ENCODE measurements at regions of chr7 and their contacts with region 1.

Region 1: GRCh38 chr7:102464577-102465280 is at the starts of genes ALKBH4 and LRWD1:
- DNase-seq: peak; percentile 90 to 92 (median 91)
- H3K4me3 ChIP-seq: peak within 1 kb of the TSS; percentile 93 to 94
- H3K4me3 Mint-ChIP-seq: peak within 1 kb of the TSS; percentile 90 to 94 (median 92)
- H3K27ac ChIP-seq: peak within 1 kb of the TSS; percentile 85
- H3K27ac Mint-ChIP-seq: peak within 1 kb of the TSS; percentile 78 to 93 (median 88)
- H3K4me1 ChIP-seq: peaks cover 30% of the 10 kb centered on the region
- H3K4me1 Mint-ChIP-seq: peaks cover 11 to 54% (median 28%) of the 10 kb centered on the region in 4 donors
- H3K27me3 ChIP-seq: no peaks in the 10 kb centered on the region
- H3K27me3 Mint-ChIP-seq: no peaks in the 10 kb centered on the region
- total RNA-seq, gene ALKBH4: 11.8 to 11.9 TPM
- total RNA-seq, gene LRWD1: 26.0 to 28.5 TPM

Region 2: DNA sequence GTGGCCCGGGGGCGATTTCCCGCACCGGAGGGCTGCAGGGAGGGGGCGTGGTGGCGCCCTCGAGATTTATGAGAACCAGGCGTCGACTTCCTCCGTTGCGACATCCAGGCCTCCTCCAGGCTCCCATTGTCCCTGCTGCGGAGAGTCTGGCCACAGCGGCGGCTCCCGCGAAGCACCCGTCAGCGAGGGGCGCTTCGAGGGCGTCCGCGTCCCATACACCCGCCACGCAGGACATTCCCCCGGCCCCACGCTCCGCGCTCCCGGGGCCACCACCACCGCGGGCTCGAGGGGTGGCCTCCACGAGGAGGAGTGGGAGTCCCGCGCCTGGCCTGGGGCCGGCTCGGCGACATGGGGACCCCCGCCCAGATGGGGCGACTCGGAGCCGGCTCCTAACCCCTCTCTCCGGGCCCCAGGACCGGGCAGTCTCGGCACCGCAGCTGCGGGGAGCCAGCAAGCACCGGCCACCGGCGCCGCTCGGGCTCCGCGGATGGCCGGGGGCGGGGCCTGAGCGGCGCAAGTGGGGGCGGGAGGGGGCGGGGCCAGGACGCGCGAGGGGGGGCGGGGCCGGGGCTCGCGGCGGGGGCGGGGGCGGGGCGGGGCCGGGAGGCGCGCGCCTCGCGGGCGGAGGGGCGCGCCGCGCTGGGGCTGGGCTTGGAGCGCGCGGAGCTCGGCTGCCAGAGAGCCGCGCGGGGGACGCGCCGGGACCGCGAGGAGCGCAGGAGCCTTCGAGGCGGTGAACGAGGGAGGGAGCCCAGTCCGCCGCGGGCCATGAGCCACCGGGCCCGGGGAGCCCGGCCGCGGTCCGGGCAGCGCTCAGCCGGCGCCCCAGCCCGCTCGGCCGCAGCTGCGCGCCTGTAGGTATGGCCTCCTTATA is 178.3 kb before region 1 on chr7 and contains the start of gene SH2B2:
- CTCF ChIA-PET with region 1: no interaction called
- POLR2A ChIA-PET with region 1: no interaction called
- intact Hi-C with region 1: loop called (anchors 5 kb)
- DNase-seq: peak; percentile 43 to 58 (median 50)
- H3K4me3 ChIP-seq: peak within 1 kb of the TSS; percentile 29 to 68
- H3K4me3 Mint-ChIP-seq: peak within 1 kb of the TSS; percentile 70 to 86 (median 78)
- H3K27ac ChIP-seq: peak within 1 kb of the TSS; percentile 38
- H3K27ac Mint-ChIP-seq: peak within 1 kb of the TSS in 3 of 7 donors; percentile 42 to 85 (median 55)
- H3K4me1 ChIP-seq: peaks cover 35% of the 10 kb centered on the region
- H3K4me1 Mint-ChIP-seq: peaks cover 19 to 45% (median 29%) of the 10 kb centered on the region in 4 donors
- H3K27me3 ChIP-seq: no peaks in the 10 kb centered on the region
- H3K27me3 Mint-ChIP-seq: peaks cover 0 to 2% of the 10 kb centered on the region in 2 donors
- total RNA-seq, gene SH2B2: 0.79 to 1.2 TPM

Region 3: DNA sequence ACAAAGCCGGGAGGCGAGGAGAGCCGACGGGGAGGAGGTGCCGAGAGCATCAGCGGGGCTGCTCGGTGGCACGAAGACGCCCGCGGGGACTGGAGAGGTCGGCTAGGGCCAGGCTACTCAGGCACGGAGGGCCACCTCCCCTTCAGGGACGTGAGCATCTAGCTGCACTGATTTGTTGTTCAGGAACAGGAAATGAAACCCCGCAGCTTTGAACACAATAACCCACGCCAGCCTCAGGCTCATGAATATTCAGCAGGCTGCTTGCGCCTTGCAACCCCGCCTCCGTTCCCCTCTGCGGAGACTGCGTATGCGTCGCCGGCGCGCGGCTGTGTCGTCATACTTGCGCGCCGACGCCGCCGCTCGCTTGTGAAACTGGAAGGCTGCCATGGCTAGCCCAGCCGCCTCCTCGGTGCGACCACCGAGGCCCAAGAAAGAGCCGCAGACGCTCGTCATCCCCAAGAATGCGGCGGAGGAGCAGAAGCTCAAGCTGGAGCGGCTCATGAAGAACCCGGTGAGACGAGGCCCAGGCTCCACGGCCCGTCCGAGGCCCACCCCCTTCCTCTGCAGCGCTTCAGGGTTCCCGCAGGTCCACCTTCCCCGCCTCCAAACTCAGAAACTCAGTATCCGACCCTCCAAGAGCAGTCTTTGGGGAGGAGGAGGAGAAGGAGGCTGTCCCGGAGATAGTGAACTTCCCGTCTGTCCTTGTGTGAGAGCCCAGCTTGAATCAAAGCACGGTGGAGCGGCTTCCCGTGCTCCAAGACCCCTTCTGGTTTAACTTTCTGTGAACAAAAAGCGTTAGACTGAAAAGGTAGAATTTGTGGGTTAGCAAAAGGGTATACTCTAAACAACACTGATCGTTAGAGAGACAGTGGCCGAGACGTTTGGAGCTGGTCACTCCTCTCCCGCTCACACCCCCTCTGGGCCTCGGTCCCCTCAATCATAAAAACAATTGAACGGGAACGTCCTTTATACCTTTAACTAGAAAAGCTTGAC is 68.4 kb before region 1 on chr7 and contains the start of gene PRKRIP1:
- CTCF ChIA-PET with region 1: interaction called, 6 read pairs
- POLR2A ChIA-PET with region 1: interaction called, 18 read pairs
- intact Hi-C with region 1: loop called (anchors 1 kb)
- DNase-seq: peak; percentile 86 to 96 (median 91)
- H3K4me3 ChIP-seq: peak within 1 kb of the TSS; percentile 67 to 99
- H3K4me3 Mint-ChIP-seq: peak within 1 kb of the TSS; percentile 96 to 99 (median 96)
- H3K27ac ChIP-seq: peak within 1 kb of the TSS; percentile 91
- H3K27ac Mint-ChIP-seq: peak within 1 kb of the TSS; percentile 91 to 99 (median 98)
- H3K4me1 ChIP-seq: peaks cover 17% of the 10 kb centered on the region
- H3K4me1 Mint-ChIP-seq: peaks cover 15 to 30% (median 19%) of the 10 kb centered on the region in 4 donors
- H3K27me3 ChIP-seq: no peaks in the 10 kb centered on the region
- H3K27me3 Mint-ChIP-seq: no peaks in the 10 kb centered on the region
- total RNA-seq, gene PRKRIP1: 43.2 to 47.6 TPM

Region 4: DNA sequence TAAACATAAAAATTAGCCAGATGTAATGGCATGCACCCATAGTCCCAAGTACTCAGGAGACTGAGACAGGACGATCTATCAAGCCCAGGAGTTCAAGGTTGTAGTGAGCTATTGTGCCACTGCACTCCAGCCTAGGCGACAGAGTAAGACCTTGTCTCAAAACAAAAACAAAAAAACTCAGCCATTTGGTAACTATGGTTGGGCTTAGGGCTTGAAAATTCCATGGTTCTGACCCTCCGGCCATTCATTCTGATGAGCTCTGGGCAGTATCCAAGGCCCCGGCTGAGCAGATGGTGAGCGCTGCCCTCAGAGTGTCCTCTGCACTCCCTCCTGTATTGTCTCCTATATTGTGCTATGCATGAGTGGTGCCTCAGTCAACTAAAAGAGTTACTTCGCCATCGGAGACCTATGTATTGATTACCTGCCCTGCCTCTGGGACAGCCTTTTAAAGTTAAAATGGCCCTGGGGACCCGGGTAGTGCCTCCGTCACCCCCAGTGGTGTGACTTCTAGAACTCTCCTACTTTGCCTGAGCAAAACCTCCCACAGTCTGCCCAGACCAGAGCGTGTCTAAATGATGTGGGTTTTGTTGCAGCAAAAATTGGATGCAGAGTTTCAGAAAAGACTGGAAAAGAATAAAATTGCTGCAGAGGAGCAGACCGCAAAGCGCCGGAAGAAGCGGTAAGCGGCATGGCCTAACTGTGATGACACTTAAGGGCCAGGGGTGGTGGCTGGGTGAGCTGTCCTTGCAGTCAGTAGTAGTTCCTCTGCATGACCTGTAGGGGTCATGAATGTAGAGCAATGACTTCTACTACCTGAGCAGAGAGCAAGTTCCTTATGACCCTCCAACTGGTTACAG is 60.5 kb before region 1 on chr7:
- CTCF ChIA-PET with region 1: interaction called, 26 read pairs
- POLR2A ChIA-PET with region 1: interaction called, 9 read pairs
- intact Hi-C with region 1: loop called (anchors 1 kb)
- DNase-seq: peak; percentile 64 to 72 (median 65)
- H3K4me3 ChIP-seq: no peak overlapping the region
- H3K4me3 Mint-ChIP-seq: no peak overlapping the region
- H3K27ac ChIP-seq: no peak overlapping the region
- H3K27ac Mint-ChIP-seq: peak overlapping the region; percentile 27 to 79 (median 71)
- H3K4me1 ChIP-seq: no peaks in the 10 kb centered on the region
- H3K4me1 Mint-ChIP-seq: peaks cover 5 to 9% (median 7%) of the 10 kb centered on the region in 4 donors
- H3K27me3 ChIP-seq: no peaks in the 10 kb centered on the region
- H3K27me3 Mint-ChIP-seq: no peaks in the 10 kb centered on the region

Region 5: DNA sequence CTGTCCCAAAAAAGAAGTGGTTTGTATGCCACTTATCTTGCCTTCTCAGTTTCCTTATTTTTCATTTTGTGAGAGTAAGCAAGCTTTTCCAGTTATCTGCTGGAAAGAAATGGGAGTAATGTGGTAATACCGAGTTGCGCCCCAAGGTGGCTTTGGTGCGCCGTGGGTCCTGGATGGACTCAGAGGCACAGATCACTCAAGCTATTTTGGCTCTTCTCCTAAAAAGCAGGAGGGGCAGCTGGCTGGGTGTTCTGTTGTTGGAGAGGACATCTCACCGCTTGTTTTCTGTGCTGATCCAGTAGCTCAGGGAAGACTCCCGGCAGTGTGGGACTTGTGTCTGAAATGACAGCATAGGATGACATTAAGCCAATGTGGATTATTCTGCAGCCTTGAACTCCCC is 52.2 kb before region 1 on chr7:
- CTCF ChIA-PET with region 1: interaction called, 36 read pairs
- POLR2A ChIA-PET with region 1: interaction called, 13 read pairs
- intact Hi-C with region 1: no loop called
- DNase-seq: peak in 4 of 5 donors; percentile 42 to 56 (median 44)
- H3K4me3 ChIP-seq: no peak overlapping the region
- H3K4me3 Mint-ChIP-seq: no peak overlapping the region
- H3K27ac ChIP-seq: no peak overlapping the region
- H3K27ac Mint-ChIP-seq: peak overlapping the region; percentile 53 to 92 (median 78)
- H3K4me1 ChIP-seq: peaks cover 37% of the 10 kb centered on the region
- H3K4me1 Mint-ChIP-seq: peaks cover 24 to 41% (median 31%) of the 10 kb centered on the region in 4 donors
- H3K27me3 ChIP-seq: no peaks in the 10 kb centered on the region
- H3K27me3 Mint-ChIP-seq: no peaks in the 10 kb centered on the region

Region 6: GRCh38 chr7:102425639-102426267 is 39.0 kb before region 1 on chr7:
- CTCF ChIA-PET with region 1: interaction called, 9 read pairs
- POLR2A ChIA-PET with region 1: interaction called, 27 read pairs
- intact Hi-C with region 1: loop called (anchors 2 kb)
- DNase-seq: peak; percentile 80 to 94 (median 84)
- H3K4me3 ChIP-seq: peak overlapping the region; percentile 48 to 49
- H3K4me3 Mint-ChIP-seq: peak overlapping the region; percentile 83 to 92 (median 87)
- H3K27ac ChIP-seq: peak overlapping the region; percentile 98
- H3K27ac Mint-ChIP-seq: peak overlapping the region; percentile 100
- H3K4me1 ChIP-seq: peaks cover 83% of the 10 kb centered on the region
- H3K4me1 Mint-ChIP-seq: peaks cover 39 to 75% (median 56%) of the 10 kb centered on the region in 4 donors
- H3K27me3 ChIP-seq: no peaks in the 10 kb centered on the region
- H3K27me3 Mint-ChIP-seq: no peaks in the 10 kb centered on the region

Region 7: DNA sequence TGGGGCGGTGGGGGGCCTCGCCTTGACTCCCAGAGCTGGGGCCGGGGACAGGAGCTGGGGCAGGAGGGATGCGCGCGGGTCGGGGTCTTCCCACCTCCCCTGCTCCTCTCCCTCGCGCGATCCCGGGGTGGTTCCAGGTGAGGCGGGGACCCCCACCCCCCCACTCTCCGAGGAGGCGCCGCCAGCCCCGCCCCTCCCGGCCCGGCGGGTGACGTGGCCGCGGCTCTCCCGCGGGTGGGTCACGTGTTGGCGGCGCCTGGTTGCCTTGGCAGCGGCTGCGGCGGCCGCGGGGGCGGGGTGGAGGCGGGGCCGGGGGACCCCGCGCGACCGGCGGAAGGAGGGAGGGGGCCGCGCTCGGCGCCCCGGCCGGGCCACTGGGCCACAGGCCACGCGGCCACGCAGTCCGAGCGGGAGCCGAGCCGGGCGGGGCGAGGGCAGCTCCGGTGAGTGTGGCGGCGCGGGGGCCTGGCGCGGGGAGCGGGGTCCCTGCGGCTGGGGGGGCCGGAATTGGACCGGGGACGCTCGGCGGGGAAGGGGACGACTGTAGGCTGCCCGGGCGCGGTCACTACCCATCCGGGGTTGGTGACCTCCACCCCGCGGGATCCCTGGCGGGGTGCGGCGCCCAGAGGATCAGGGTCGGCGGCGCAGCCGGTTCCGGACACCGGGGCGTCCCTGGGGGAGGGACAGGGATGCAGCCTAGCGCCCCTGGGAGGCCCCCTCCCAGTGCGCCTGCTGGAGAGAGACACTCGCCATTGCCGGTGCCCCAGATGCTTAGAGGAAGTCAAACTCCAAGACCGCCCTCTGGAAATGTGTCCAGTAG is 31.3 kb before region 1 on chr7 and contains the start of gene ORAI2:
- CTCF ChIA-PET with region 1: interaction called, 6 read pairs
- POLR2A ChIA-PET with region 1: interaction called, 26 read pairs
- intact Hi-C with region 1: loop called (anchors 1 kb)
- DNase-seq: peak; percentile 81 to 86 (median 84)
- H3K4me3 ChIP-seq: peak within 1 kb of the TSS; percentile 74 to 76
- H3K4me3 Mint-ChIP-seq: peak within 1 kb of the TSS; percentile 80 to 90 (median 88)
- H3K27ac ChIP-seq: peak within 1 kb of the TSS; percentile 88
- H3K27ac Mint-ChIP-seq: peak within 1 kb of the TSS; percentile 98 to 100 (median 100)
- H3K4me1 ChIP-seq: peaks cover 61% of the 10 kb centered on the region
- H3K4me1 Mint-ChIP-seq: peaks cover 26 to 62% (median 43%) of the 10 kb centered on the region in 4 donors
- H3K27me3 ChIP-seq: no peaks in the 10 kb centered on the region
- H3K27me3 Mint-ChIP-seq: no peaks in the 10 kb centered on the region
- total RNA-seq, gene ORAI2: 29.0 to 31.6 TPM

Region 8: DNA sequence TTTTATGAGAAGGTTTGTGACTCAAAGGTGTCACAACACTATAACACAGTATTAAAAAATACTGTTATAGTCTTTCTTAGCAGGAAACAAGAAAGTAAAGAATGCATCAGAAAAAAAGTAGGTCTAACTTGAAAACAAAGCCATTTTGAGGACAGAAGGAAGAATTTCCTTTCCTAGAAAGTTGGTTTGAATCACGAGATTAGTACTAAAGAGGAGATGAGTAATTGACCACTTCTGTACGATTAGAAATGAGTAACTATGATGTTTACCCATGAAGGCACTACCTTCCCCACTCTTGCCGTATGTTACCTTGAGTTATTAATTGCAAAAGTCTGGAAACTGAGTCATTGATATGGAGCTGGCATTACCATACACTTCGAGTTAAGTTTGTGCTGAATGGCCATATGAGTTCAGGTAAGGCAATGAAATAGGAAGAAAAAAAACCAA is 349.3 kb after region 1 on chr7:
- CTCF ChIA-PET with region 1: no interaction called
- POLR2A ChIA-PET with region 1: no interaction called
- intact Hi-C with region 1: no loop called
- DNase-seq: no peak
- H3K4me3 ChIP-seq: no peak overlapping the region
- H3K4me3 Mint-ChIP-seq: no peak overlapping the region
- H3K27ac ChIP-seq: no peak overlapping the region
- H3K27ac Mint-ChIP-seq: no peak overlapping the region
- H3K4me1 ChIP-seq: no peaks in the 10 kb centered on the region
- H3K4me1 Mint-ChIP-seq: no peaks in the 10 kb centered on the region
- H3K27me3 ChIP-seq: no peaks in the 10 kb centered on the region
- H3K27me3 Mint-ChIP-seq: no peaks in the 10 kb centered on the region

Measured in CD4-positive, alpha-beta memory T cell (primary cell).